CD14-positive monocyte (primary cell): ENCODE measurements at regions of chr2 and their contacts with region 1.

Region 1: DNA sequence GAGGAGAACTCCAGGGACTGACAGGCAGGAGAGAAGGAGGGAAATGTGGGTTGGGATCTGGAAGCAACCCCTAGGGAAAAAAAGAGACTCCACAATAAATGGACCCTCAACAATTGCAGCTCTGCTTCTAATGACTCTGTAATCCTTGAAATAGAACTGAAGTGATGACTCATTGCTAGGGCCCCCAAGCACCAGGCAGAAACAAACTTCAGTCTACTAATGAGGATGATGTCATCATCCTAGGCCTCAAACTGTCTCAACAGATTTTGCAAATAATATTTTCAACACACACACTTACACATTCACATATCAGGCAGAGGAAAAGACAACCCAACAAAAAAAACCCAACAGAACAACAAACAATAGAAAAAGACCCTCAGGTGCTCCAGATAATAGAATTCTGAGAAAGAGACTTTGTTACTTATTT is 143.3 kb downstream of the HDAC4 start:
- DNase-seq: peak; percentile 82 to 92 (median 92)
- H3K4me3 ChIP-seq: peak overlapping the region in 1 of 3 experiments; percentile 58
- H3K4me3 Mint-ChIP-seq: peak overlapping the region; percentile 3 to 65
- H3K27ac ChIP-seq: peak overlapping the region; percentile 41 to 95
- H3K27ac Mint-ChIP-seq: peak overlapping the region; percentile 92 to 96 (median 95)
- H3K4me1 ChIP-seq: peaks cover 96 to 100% of the 10 kb centered on the region in 2 donors
- H3K4me1 Mint-ChIP-seq: peaks cover 97% of the 10 kb centered on the region
- H3K27me3 ChIP-seq: no peaks in the 10 kb centered on the region
- H3K27me3 Mint-ChIP-seq: no peaks in the 10 kb centered on the region
- CTCF ChIP-seq: no peak

Region 2: GRCh38 chr2:239239607-239240413 is 17.7 kb before region 1 on chr2:
- intact Hi-C with region 1: loop called in 1 of 2 experiments (anchors 2 kb)
- DNase-seq: peak in 1 of 3 donors; percentile 51
- H3K4me3 ChIP-seq: peak overlapping the region in 2 of 3 experiments; percentile 14 to 72
- H3K4me3 Mint-ChIP-seq: peak overlapping the region; percentile 78 to 89
- H3K27ac ChIP-seq: peak overlapping the region; percentile 87 to 90
- H3K27ac Mint-ChIP-seq: peak overlapping the region; percentile 91 to 95 (median 94)
- H3K4me1 ChIP-seq: peaks cover 91 to 100% of the 10 kb centered on the region in 2 donors
- H3K4me1 Mint-ChIP-seq: peaks cover 95% of the 10 kb centered on the region
- H3K27me3 ChIP-seq: no peaks in the 10 kb centered on the region
- H3K27me3 Mint-ChIP-seq: peaks cover 0 to 3% (median 1%) of the 10 kb centered on the region in 3 donors
- CTCF ChIP-seq: no peak

Region 3: GRCh38 chr2:239465017-239466001 is 207.8 kb after region 1 on chr2:
- intact Hi-C with region 1: loop called in 1 of 2 experiments (anchors 10 kb)
- DNase-seq: peak; percentile 99
- H3K4me3 ChIP-seq: peak overlapping the region in 1 of 3 experiments; percentile 21
- H3K4me3 Mint-ChIP-seq: peak overlapping the region; percentile 41 to 77
- H3K27ac ChIP-seq: peak overlapping the region; percentile 87 to 97
- H3K27ac Mint-ChIP-seq: peak overlapping the region in 4 of 7 donors; percentile 97 to 99 (median 98)
- H3K4me1 ChIP-seq: peaks cover 38 to 39% of the 10 kb centered on the region in 2 donors
- H3K4me1 Mint-ChIP-seq: peaks cover 41% of the 10 kb centered on the region
- H3K27me3 ChIP-seq: no peaks in the 10 kb centered on the region
- H3K27me3 Mint-ChIP-seq: peaks cover 0 to 2% (median 2%) of the 10 kb centered on the region in 3 donors
- CTCF ChIP-seq: no peak